AG04450 (cell line): ENCODE measurements at regions of chr15 and their contacts with region 1.

Region 1: GRCh38 chr15:43225201-43225949 is 4.6 kb upstream of the EPB42 start:
- DNase-seq: peak; percentile 11
- H3K4me3 ChIP-seq: no peak overlapping the region
- H3K27ac ChIP-seq: no peak overlapping the region
- H3K27me3 ChIP-seq: peaks cover 15% of the 10 kb centered on the region
- CTCF ChIP-seq: peak; percentile 83

Region 2: DNA sequence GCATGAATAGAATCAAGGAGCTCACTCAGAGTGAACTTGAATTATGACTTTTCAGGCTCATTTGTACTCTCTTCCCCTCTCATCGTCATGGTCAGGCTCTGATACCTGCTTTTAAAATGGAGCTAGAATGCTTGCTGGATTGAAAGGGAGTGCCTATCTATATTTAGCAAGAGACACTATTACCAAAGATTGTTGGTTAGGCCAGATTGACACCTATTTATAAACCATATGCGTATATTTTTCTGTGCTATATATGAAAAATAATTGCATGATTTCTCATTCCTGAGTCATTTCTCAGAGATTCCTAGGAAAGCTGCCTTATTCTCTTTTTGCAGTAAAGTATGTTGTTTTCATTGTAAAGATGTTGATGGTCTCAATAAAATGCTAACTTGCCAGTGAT is 30.6 kb before region 1 on chr15:
- CTCF ChIA-PET with region 1: interaction called, 18 read pairs
- POLR2A ChIA-PET with region 1: no interaction called
- DNase-seq: no peak
- H3K4me3 ChIP-seq: no peak overlapping the region
- H3K27ac ChIP-seq: no peak overlapping the region
- H3K27me3 ChIP-seq: no peaks in the 10 kb centered on the region
- CTCF ChIP-seq: no peak

Region 3: GRCh38 chr15:43268111-43269105 is 43.0 kb after region 1 on chr15:
- CTCF ChIA-PET with region 1: interaction called, 15 read pairs
- POLR2A ChIA-PET with region 1: no interaction called
- DNase-seq: no peak
- H3K4me3 ChIP-seq: no peak overlapping the region
- H3K27ac ChIP-seq: no peak overlapping the region
- H3K27me3 ChIP-seq: peaks cover 31% of the 10 kb centered on the region
- CTCF ChIP-seq: peak; percentile 24; the same call in 1 of the 2 replicates

Region 4: DNA sequence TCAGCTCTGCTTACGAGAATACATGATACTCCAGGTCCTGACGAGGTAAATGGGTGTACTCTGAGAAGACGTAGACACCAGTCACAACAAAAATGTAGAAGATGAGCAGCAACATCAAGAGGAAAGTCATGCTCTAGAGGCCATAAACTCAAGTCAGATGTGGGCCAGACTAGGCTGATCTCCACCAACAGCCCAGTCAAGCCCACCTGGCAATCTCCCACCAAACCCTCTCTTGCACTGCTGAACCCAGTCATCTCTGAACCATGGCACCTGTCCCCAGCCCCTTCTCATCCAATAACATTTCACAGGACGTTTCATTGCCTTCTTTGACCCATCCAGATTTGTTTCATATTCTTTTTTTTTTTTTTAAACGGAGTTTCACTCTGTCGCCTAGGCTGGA is 510.0 kb after region 1 on chr15:
- CTCF ChIA-PET with region 1: no interaction called
- POLR2A ChIA-PET with region 1: no interaction called
- DNase-seq: no peak
- H3K4me3 ChIP-seq: no peak overlapping the region
- H3K27ac ChIP-seq: no peak overlapping the region
- H3K27me3 ChIP-seq: no peaks in the 10 kb centered on the region
- CTCF ChIP-seq: no peak